ENCODE measurements at regions of chr16 and their contacts with region 1.

Region 1: GRCh38 chr16:50326949-50327402 is 41.8 kb downstream of the BRD7 start:
- DNase-seq: peak; percentile 82
- H3K4me3 Mint-ChIP-seq: no peak overlapping the region
- H3K27ac Mint-ChIP-seq: peak overlapping the region; percentile 85
- H3K4me1 Mint-ChIP-seq: peaks cover 72% of the 10 kb centered on the region
- H3K27me3 Mint-ChIP-seq: no peaks in the 10 kb centered on the region

Region 2: GRCh38 chr16:50273681-50274325 is 53.2 kb before region 1 on chr16:
- CTCF ChIA-PET with region 1: interaction called, 15 read pairs
- POLR2A ChIA-PET with region 1: interaction called, 13 read pairs
- DNase-seq: peak; percentile 60
- H3K4me3 Mint-ChIP-seq: peak overlapping the region; percentile 88
- H3K27ac Mint-ChIP-seq: peak overlapping the region; percentile 98
- H3K4me1 Mint-ChIP-seq: peaks cover 98% of the 10 kb centered on the region
- H3K27me3 Mint-ChIP-seq: no peaks in the 10 kb centered on the region

Region 3: GRCh38 chr16:50354629-50355456 is 27.9 kb after region 1 on chr16:
- CTCF ChIA-PET with region 1: interaction called, 364 read pairs
- POLR2A ChIA-PET with region 1: interaction called, 86 read pairs
- DNase-seq: no peak
- H3K4me3 Mint-ChIP-seq: no peak overlapping the region
- H3K27ac Mint-ChIP-seq: no peak overlapping the region
- H3K4me1 Mint-ChIP-seq: peaks cover 30% of the 10 kb centered on the region
- H3K27me3 Mint-ChIP-seq: no peaks in the 10 kb centered on the region

Region 4: DNA sequence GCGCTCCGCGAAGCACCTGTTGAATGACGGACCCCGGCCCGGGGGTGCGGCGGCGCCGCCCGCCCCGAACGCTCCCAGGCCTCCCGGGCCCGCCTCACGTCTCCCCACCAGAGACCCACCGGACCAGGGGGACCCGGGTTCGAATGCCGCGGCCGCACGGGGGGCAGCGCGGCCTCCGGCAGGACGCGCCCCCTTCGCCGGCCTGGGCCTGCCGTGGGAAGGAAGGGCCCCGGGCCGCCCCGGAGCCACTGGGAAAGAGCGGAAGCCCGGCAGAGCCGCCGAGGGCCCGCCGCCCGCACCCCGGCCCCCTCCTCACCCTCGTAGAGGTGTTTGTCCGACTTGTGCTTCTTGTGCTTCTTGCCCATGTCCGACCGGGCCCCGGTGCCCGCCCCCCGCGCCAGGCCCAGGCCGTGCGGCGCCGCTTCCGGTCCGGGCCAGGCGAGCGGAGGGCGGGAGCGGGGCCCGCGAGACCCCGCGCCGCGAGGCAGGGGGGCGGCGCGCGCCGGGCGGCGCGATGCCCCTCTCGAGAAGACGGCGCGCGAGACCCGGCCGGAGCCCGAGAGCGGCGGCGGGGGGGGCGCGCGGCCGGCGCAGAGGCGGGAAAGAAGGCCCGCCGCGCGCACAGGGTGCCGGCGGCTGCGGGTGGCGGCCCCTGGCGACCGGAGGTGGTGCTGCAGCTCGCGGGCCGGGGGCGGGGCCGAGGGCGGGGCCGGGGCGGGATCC is 41.6 kb after region 1 on chr16 and contains the start of gene BRD7:
- CTCF ChIA-PET with region 1: interaction called, 29 read pairs
- POLR2A ChIA-PET with region 1: interaction called, 8 read pairs
- DNase-seq: peak; percentile 80
- H3K4me3 Mint-ChIP-seq: peak within 1 kb of the TSS; percentile 85
- H3K27ac Mint-ChIP-seq: peak within 1 kb of the TSS; percentile 71
- H3K4me1 Mint-ChIP-seq: peaks cover 46% of the 10 kb centered on the region
- H3K27me3 Mint-ChIP-seq: peaks cover 4% of the 10 kb centered on the region
- total RNA-seq, gene BRD7: 93.3 to 101 TPM

Region 5: GRCh38 chr16:50747207-50747956 is 420.4 kb after region 1 on chr16:
- CTCF ChIA-PET with region 1: interaction called, 11 read pairs
- POLR2A ChIA-PET with region 1: interaction called, 4 read pairs
- DNase-seq: peak; percentile 35
- H3K4me3 Mint-ChIP-seq: peak overlapping the region; percentile 75
- H3K27ac Mint-ChIP-seq: peak overlapping the region; percentile 97
- H3K4me1 Mint-ChIP-seq: peaks cover 60% of the 10 kb centered on the region
- H3K27me3 Mint-ChIP-seq: no peaks in the 10 kb centered on the region

Measured in activated CD4-positive, alpha-beta memory T cell treated with anti-CD3 and anti-CD28 coated beads, Interleukin-2, amount 10 ng/mL, durations not matched to agents 7 days and 5 days (primary cell).